OCI-LY7 (cell line): ENCODE measurements at regions of chr11 and their contacts with region 1.

Region 1: GRCh38 chr11:26753723-26754504 is 32.1 kb upstream of the SLC5A12 start:
- DNase-seq: peak; percentile 75
- H3K4me3 ChIP-seq: no peak overlapping the region
- H3K27ac ChIP-seq: no peak overlapping the region
- H3K4me1 ChIP-seq: no peaks in the 10 kb centered on the region
- CTCF ChIP-seq: peak; percentile 97

Region 2: DNA sequence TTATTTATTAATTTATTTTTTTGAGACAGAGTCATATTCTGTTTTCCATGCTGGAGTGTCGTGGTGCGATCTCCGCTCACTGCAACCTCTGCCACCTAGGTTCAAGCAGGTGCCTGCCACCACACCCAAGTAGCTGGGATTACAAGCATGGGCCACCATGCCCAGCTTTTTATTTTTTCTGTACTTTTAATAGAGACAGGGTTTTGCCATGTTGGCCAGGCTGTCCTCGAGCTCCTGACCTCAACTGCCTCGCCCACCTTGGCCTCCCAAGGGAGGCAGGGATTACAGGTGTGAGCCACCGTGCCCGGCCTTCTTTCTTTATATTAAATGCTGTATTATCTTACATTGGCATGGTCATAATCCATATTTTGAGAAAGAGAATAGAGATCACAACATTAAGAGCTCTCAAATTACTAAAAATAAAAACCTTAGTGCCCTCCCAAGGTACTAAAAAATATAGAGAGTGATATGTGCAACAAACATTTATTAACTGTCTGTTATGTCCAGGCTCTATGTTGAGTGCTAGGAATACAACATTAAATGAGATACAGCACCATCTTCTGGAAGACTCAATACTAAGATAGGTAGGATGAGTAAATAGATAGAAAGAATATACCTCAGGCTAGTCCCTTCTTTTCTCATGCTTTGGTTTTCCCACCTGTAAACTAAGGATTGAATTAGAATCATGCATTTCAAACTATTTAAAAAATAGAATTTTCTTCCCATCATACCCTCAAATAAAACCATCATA is 370.8 kb after region 1 on chr11:
- CTCF ChIA-PET with region 1: no interaction called
- POLR2A ChIA-PET with region 1: interaction called, 3 read pairs
- intact Hi-C with region 1: loop called (anchors 10 kb)
- DNase-seq: peak; percentile 30
- H3K4me3 ChIP-seq: no peak overlapping the region
- H3K27ac ChIP-seq: no peak overlapping the region
- H3K4me1 ChIP-seq: no peaks in the 10 kb centered on the region
- CTCF ChIP-seq: peak; percentile 58

Region 3: DNA sequence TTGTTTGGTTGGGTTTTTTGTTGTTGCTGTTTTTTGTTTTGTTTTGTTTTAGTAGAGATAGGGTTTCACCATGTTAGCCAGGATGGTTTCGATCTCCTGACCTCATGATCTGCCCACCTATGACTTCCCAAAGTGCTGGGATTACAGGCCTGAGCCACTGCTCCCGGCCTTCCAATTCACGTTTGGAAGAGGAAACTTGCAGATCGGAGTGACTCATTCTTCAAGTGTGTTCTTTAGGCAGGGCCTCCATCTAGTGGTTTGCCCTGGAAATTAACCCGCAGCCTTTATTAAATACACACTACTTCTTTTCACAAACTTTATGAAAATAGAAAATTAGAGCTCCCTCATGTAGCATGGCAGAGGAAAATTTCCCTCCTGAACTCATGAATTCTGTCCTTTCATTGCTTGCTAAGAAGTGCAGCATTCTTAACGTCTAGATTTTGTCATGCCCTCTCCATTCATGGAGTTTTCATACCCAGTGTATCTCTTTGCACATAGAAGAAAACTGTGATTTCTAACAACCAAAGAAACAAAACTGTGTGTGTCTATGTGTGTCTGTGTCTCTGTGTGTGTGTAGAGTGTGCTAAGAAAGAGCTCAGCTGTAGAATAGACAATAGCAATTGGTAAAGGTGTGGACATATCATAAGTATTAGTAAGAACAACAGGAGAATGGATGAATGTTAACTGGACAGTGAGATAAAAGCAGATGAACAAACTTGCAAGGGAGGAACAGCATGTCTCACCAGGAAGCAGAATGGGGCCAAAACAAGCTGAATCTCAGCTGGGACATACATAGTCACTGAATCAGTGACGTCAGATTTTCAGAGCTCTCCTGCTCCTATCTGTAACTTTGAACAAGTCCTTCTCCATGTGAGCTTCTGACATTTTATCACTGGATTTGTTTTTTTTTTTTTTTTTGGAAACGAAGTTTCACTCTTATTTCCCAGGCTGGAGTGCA is 405.1 kb after region 1 on chr11:
- CTCF ChIA-PET with region 1: no interaction called
- POLR2A ChIA-PET with region 1: interaction called, 5 read pairs
- intact Hi-C with region 1: loop called (anchors 1 kb)
- DNase-seq: peak; percentile 71
- H3K4me3 ChIP-seq: no peak overlapping the region
- H3K27ac ChIP-seq: no peak overlapping the region
- H3K4me1 ChIP-seq: no peaks in the 10 kb centered on the region
- CTCF ChIP-seq: peak; percentile 88

Region 4: DNA sequence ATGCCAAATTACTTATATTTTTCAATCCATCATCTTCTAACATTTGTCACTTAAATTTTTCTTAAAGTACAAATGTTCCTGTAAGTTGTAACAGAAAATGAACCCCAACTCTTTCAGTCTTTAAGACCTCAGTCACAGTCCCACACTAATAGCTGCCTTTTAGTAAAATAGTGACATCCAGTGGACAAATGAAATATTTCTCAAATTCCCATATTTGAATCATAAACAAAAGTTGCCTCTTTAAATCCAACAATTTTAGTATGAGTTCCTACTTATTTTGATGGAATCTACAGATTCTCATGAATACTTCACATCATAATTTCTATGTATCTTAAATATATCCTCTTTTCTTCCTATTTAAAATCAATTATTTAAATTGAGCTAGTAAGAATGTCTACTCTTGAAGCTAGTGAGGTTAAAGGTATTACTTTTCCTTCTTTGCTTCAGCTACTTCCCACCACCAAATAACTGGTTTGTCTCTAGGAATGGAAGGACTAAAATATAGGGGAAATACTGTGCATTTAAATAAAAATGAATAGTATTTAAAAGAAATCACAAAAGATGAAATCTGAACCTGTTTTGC is 743.5 kb after region 1 on chr11:
- CTCF ChIA-PET with region 1: no interaction called
- POLR2A ChIA-PET with region 1: no interaction called
- intact Hi-C with region 1: loop called (anchors 10 kb)
- DNase-seq: peak; percentile 44
- H3K4me3 ChIP-seq: no peak overlapping the region
- H3K27ac ChIP-seq: no peak overlapping the region
- H3K4me1 ChIP-seq: peaks cover 3% of the 10 kb centered on the region
- CTCF ChIP-seq: peak; percentile 86